GM12878 (cell line): ENCODE measurements at regions of chr6 and their contacts with region 1.

Region 1: DNA sequence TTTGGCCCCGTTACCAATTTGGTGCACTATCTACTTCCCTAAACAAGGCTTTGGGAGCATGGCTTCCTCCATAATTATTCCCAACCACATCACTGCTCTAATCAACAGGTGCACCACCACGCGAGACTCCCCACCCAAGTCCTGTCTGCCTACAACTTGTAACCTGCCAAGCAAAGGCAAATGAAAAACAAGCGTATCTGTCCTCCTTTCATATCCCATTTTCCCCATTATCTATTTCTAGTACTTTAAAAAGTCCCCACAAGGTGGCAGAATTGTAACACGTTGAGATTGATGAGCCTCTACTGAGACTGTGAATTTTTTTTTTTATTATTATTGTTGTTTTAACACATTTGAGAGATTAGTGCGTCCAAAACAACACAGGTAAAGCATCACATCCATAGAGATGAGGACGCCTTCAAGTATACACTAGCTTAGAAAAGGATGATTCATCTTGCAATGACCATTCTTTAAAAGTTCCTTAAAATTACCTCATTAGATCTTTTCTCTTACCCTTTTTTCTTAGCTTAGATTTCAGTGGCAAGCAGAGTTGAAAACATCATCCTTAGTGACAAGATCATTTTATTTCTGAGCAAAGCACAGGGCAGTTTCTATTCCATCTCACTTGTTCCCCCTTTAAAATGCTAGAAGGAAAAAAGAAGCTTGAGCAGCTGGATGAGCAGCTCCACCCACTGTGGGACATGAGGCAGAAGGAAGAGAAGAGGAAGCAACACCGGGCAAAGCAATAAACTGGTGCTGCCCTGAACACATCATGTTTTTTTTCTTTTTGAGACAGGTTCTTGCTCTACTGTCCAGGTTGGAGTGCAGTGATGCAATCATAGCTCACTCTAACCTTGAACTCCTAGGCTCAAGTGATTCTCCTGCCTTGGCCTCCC is 210.8 kb downstream of the ARHGAP18 start:
- DNase-seq: no peak
- ATAC-seq: peak; percentile 89
- H3K4me3 ChIP-seq: no peak overlapping the region
- H3K27ac ChIP-seq: no peak overlapping the region
- H3K4me1 ChIP-seq: peaks cover 6% of the 10 kb centered on the region
- H3K27me3 ChIP-seq: no peaks in the 10 kb centered on the region
- CTCF ChIP-seq: peak; percentile 37 to 63 (median 44); a peak in 5 of 6 replicates
- EP300 ChIP-seq: no peak
- POLR2A ChIP-seq: no peak
- RAD21 ChIP-seq: peak; percentile 88

Region 2: DNA sequence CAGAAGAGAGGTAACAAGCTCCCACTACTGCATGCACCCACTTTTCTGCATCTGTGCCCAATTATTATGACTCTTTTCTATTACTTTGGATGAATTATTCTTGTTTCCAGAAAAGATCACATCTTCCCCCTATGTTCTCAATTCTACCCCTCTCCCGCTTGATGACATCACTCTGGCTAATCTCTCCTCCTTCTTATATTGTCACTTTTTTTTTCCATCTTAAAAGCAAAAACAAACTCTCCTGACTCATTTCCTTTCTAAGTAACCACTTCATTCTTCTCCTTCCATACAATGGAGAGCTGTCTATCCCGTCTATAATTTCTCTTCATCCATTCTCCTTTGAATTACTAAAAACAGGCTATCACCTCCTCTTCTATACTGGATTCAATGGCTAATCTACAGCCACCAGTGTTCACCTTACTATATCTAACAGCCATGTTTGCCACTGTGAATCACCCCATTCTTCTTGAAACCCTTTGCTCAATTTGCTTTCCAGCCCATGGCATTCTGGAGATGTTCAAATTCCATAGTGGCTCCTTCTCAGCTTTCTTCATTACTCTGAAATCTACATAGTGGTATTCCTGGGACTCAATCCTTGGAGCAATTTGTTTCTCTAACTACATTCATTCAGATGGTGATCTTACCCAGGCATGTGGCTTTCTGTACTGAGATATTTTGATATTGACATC is 167.6 kb before region 1 on chr6:
- CTCF ChIA-PET with region 1: no interaction called
- POLR2A ChIA-PET with region 1: no interaction called
- RAD21 ChIA-PET with region 1: no interaction called
- SMC1A ChIA-PET with region 1: no interaction called
- in situ Hi-C with region 1: no loop called
- intact Hi-C with region 1: no loop called
- DNase-seq: no peak
- ATAC-seq: no peak
- H3K4me3 ChIP-seq: no peak overlapping the region
- H3K27ac ChIP-seq: no peak overlapping the region
- H3K4me1 ChIP-seq: no peaks in the 10 kb centered on the region
- H3K27me3 ChIP-seq: no peaks in the 10 kb centered on the region; a peak in 2 of 4 replicates
- CTCF ChIP-seq: no peak
- EP300 ChIP-seq: no peak
- POLR2A ChIP-seq: no peak
- RAD21 ChIP-seq: no peak

Region 3: DNA sequence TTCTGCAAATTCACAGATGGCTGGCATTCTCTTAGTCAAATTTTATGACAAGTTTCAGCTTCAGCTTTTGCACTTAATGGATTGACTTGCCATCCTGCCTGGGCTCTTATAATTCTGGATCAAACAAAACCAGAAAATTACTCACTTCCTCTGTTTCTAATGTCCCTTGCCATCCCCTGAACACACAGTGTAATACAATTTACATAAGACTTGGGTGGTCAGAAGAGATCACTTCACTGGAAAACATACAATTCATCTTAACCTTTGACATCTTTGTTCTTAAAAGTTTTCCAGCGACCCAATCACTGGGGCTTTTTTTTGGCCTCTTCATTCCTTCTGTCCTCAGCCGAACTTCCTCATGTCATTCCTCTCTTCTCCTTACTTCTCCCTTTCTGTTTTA is 11.8 kb after region 1 on chr6:
- CTCF ChIA-PET with region 1: interaction called, 20 read pairs
- POLR2A ChIA-PET with region 1: interaction called, 3 read pairs
- RAD21 ChIA-PET with region 1: interaction called, 4 read pairs
- SMC1A ChIA-PET with region 1: interaction called, 8 read pairs
- in situ Hi-C with region 1: no loop called
- intact Hi-C with region 1: no loop called
- DNase-seq: no peak
- ATAC-seq: no peak
- H3K4me3 ChIP-seq: no peak overlapping the region
- H3K27ac ChIP-seq: no peak overlapping the region
- H3K4me1 ChIP-seq: no peaks in the 10 kb centered on the region
- H3K27me3 ChIP-seq: no peaks in the 10 kb centered on the region
- CTCF ChIP-seq: no peak
- EP300 ChIP-seq: no peak
- POLR2A ChIP-seq: no peak
- RAD21 ChIP-seq: no peak

Region 4: GRCh38 chr6:129567374-129567773 is 68.2 kb after region 1 on chr6:
- CTCF ChIA-PET with region 1: interaction called, 23 read pairs
- POLR2A ChIA-PET with region 1: no interaction called
- RAD21 ChIA-PET with region 1: interaction called, 8 read pairs
- SMC1A ChIA-PET with region 1: interaction called, 23 read pairs
- in situ Hi-C with region 1: no loop called
- intact Hi-C with region 1: loop called (anchors 1 kb)
- DNase-seq: no peak
- ATAC-seq: peak; percentile 66
- H3K4me3 ChIP-seq: no peak overlapping the region
- H3K27ac ChIP-seq: no peak overlapping the region
- H3K4me1 ChIP-seq: no peaks in the 10 kb centered on the region
- H3K27me3 ChIP-seq: no peaks in the 10 kb centered on the region
- CTCF ChIP-seq: peak in 2 of 3 experiments; percentile 11 to 34; a peak in 3 of 6 replicates
- EP300 ChIP-seq: no peak
- POLR2A ChIP-seq: no peak
- RAD21 ChIP-seq: no peak; the same call in 1 of the 2 replicates

Region 5: DNA sequence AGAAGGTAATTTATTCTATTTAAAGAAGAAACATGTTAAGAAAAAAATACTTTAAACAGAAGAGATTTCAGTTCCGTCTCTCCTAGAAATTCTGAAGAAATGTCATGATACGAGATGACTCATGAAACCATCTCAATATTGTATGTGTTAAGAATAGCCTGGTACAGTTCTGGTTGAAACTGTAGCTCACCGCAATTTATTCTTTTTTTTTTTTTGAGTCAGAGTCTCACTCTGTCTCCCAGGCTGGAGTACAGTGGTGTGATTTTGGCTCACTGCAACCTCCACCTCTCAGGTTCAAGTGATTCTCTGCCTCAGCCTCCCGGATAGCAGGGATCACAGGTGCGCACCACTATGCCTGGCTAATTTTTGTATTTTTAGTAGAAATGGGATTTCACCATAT is 107.5 kb after region 1 on chr6:
- CTCF ChIA-PET with region 1: interaction called, 92 read pairs
- POLR2A ChIA-PET with region 1: no interaction called
- RAD21 ChIA-PET with region 1: interaction called, 5 read pairs
- SMC1A ChIA-PET with region 1: interaction called, 51 read pairs
- in situ Hi-C with region 1: no loop called
- intact Hi-C with region 1: no loop called
- DNase-seq: peak; percentile 59
- ATAC-seq: peak; percentile 87
- H3K4me3 ChIP-seq: no peak overlapping the region
- H3K27ac ChIP-seq: peak overlapping the region; percentile 80
- H3K4me1 ChIP-seq: peaks cover 31% of the 10 kb centered on the region
- H3K27me3 ChIP-seq: no peaks in the 10 kb centered on the region
- CTCF ChIP-seq: no peak
- EP300 ChIP-seq: peak; percentile 34 to 51; a peak in 2 of 4 replicates
- POLR2A ChIP-seq: no peak
- RAD21 ChIP-seq: 0 out of 2 replicates have a peak, but pooled peaks have one; percentile 11

Region 6: DNA sequence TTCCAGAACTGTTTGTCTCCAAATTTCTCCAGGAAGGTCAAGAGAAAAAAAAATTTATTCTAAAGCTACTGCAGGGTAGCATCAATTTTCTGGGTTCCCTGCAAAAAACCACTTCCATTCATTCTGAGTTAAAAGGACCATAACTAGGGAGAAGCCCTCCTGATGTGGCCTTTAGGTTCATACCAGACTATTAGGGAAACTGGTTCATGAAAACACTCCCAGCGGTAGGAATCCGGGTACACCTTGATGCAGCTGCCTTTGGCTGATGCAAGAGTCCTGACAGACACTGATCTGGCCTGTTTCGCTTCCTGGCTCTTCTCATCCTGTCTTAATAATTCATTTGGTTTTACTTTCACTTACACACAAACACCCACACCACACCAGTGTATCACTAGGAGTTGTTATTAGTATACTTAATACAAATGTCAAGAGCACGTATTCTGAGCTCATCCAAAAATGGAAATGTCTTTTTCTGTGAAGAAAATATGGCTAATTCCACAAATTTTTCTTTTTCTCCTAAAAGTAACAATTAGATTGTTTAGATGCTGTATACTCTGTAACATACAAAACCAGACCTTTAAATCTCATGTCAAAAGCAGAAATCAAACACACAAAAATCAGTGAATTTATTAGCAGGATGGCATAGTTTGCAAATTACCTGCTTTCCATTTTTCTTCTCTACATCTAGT is 249.2 kb after region 1 on chr6:
- CTCF ChIA-PET with region 1: interaction called, 10 read pairs
- POLR2A ChIA-PET with region 1: no interaction called
- RAD21 ChIA-PET with region 1: interaction called, 5 read pairs
- SMC1A ChIA-PET with region 1: interaction called, 16 read pairs
- in situ Hi-C with region 1: loop called (anchors 5 kb)
- intact Hi-C with region 1: loop called (anchors 1 kb)
- DNase-seq: peak; percentile 82
- ATAC-seq: peak; percentile 85
- H3K4me3 ChIP-seq: peak overlapping the region; percentile 56
- H3K27ac ChIP-seq: peak overlapping the region; percentile 96
- H3K4me1 ChIP-seq: peaks cover 42% of the 10 kb centered on the region
- H3K27me3 ChIP-seq: no peaks in the 10 kb centered on the region
- CTCF ChIP-seq: no peak
- EP300 ChIP-seq: 0 out of 4 replicates have a peak, but pooled peaks of 1 of the 2 experiments have one; percentile 29
- POLR2A ChIP-seq: peak; percentile 51
- RAD21 ChIP-seq: no peak

Region 7: DNA sequence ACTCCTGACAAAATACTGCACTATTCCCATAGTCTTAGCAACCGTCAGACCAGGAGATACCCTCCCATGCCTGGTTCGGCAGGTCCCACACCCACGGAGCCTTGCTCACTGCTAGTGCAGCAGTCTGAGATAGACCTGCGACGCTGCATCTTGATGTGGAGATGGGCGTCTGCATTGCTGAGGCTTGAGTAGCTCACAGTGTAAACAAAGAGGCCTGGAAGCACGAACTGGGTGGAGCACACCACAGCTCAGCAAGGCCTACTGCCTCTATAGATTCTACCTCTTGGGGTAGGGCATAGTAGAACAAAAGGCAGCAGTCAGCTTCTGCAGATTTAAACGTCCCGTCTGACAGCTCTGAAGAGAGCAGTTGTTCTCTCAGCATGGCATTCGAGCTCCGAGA is 336.5 kb after region 1 on chr6:
- CTCF ChIA-PET with region 1: no interaction called
- POLR2A ChIA-PET with region 1: no interaction called
- RAD21 ChIA-PET with region 1: no interaction called
- SMC1A ChIA-PET with region 1: no interaction called
- in situ Hi-C with region 1: no loop called
- intact Hi-C with region 1: no loop called
- DNase-seq: no peak
- ATAC-seq: no peak
- H3K4me3 ChIP-seq: no peak overlapping the region
- H3K27ac ChIP-seq: no peak overlapping the region
- H3K4me1 ChIP-seq: no peaks in the 10 kb centered on the region
- H3K27me3 ChIP-seq: no peaks in the 10 kb centered on the region; a peak in 1 of 4 replicates
- CTCF ChIP-seq: no peak
- EP300 ChIP-seq: no peak
- POLR2A ChIP-seq: no peak
- RAD21 ChIP-seq: no peak

Region 8: DNA sequence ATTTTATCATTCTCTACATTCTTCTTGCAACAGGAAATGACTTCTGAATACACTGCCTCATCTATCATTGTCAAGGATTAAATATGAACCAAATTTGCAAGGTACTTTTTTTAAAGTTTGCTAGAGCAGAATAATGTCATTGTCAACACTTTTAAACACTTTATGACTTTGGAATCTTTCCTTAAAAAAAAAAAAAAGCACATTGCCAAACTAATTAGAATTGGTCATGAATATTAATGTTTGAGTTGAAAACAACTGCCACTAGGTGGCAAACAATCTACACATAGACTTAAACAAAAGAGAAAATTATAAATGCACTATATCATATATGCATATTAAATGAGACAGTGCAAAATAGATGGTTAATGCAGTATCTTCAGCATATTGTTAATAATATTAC is 394.4 kb after region 1 on chr6:
- CTCF ChIA-PET with region 1: interaction called, 4 read pairs
- POLR2A ChIA-PET with region 1: no interaction called
- RAD21 ChIA-PET with region 1: no interaction called
- SMC1A ChIA-PET with region 1: interaction called, 5 read pairs
- in situ Hi-C with region 1: no loop called
- intact Hi-C with region 1: loop called (anchors 10 kb)
- DNase-seq: no peak
- ATAC-seq: peak; percentile 59; the same call in 2 of the 3 replicates
- H3K4me3 ChIP-seq: no peak overlapping the region
- H3K27ac ChIP-seq: no peak overlapping the region
- H3K4me1 ChIP-seq: no peaks in the 10 kb centered on the region; the same call in none of the 2 replicates
- H3K27me3 ChIP-seq: no peaks in the 10 kb centered on the region
- CTCF ChIP-seq: peak in 2 of 3 experiments; percentile 17 to 43; a peak in 4 of 6 replicates
- EP300 ChIP-seq: no peak
- POLR2A ChIP-seq: no peak
- RAD21 ChIP-seq: peak; percentile 61

Region 9: DNA sequence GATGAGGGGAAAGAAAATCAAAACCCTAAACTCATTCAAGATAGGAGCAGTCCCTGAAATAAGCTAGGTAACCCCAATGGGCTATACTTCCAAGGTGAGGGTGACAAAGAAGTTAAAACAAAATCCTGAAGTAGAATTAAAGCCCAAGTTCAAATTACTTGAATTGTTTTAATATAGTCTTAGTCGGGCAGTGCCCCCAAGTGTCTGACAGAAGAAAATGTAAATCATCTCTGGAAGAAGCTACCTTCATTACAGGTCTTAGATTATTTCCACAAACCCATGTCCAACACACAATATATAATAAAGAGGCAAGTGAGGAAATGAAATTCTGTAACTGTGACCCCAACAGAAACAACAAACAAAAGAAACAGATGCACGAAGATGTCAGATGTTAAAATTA is 482.4 kb after region 1 on chr6:
- CTCF ChIA-PET with region 1: interaction called, 22 read pairs
- POLR2A ChIA-PET with region 1: no interaction called
- RAD21 ChIA-PET with region 1: interaction called, 6 read pairs
- SMC1A ChIA-PET with region 1: interaction called, 9 read pairs
- in situ Hi-C with region 1: no loop called
- intact Hi-C with region 1: no loop called
- DNase-seq: no peak
- ATAC-seq: peak; percentile 49; the same call in 2 of the 3 replicates
- H3K4me3 ChIP-seq: no peak overlapping the region
- H3K27ac ChIP-seq: no peak overlapping the region
- H3K4me1 ChIP-seq: no peaks in the 10 kb centered on the region
- H3K27me3 ChIP-seq: no peaks in the 10 kb centered on the region; a peak in 1 of 4 replicates
- CTCF ChIP-seq: peak in 1 of 3 experiments; percentile 33; a peak in 1 of 6 replicates
- EP300 ChIP-seq: no peak
- POLR2A ChIP-seq: no peak
- RAD21 ChIP-seq: peak; percentile 30; the same call in 1 of the 2 replicates